AG04449 (cell line): ENCODE measurements at regions of chr7 and their contacts with region 1.

Region 1: GRCh38 chr7:108114117-108114841 is 15.9 kb downstream of the LAMB4 start:
- DNase-seq: no peak
- H3K4me3 ChIP-seq: no peak overlapping the region
- CTCF ChIP-seq: no peak

Region 2: GRCh38 chr7:107995184-107996071 is 118.9 kb before region 1 on chr7:
- CTCF ChIA-PET with region 1: no interaction called
- POLR2A ChIA-PET with region 1: no interaction called
- DNase-seq: no peak
- H3K4me3 ChIP-seq: no peak overlapping the region
- CTCF ChIP-seq: no peak

Region 3: DNA sequence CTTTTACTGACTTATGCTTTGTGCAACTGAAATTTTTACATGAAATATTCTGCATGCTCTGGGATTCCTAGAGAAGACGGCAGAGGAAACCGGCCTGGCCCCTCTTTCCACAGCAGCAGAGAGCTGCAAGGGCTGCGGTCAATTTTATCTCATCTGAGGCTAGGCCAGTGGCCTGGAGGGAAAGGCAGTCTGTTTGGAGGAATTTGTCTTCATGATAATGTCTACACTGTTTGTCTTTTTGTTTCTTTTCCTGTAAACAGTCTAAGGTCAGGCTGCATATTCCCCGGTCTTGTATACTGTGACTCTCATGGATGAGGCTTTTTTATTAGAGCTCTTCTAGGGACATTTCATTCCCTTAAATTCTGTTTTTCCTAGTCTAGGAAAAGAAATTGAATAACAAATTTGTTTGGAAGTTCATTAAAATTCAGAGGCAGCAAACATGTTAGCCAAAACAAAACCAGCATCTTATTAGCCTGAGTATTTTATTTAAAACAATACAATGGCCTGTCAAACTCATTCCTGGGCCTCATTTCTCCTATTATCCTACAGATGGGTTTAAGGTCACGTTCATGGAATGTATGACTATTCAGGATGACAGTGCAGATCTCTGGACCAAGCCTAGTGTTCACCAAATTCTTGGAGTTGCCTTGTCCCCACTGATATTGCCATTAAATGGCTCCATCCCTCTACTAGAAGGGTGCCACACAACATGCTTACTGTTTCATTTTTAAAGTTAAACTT is 10.6 kb before region 1 on chr7:
- CTCF ChIA-PET with region 1: interaction called, 11 read pairs
- POLR2A ChIA-PET with region 1: no interaction called
- DNase-seq: no peak
- H3K4me3 ChIP-seq: no peak overlapping the region
- CTCF ChIP-seq: no peak